ENCODE measurements at regions of chr20 and their contacts with region 1.

Region 1: DNA sequence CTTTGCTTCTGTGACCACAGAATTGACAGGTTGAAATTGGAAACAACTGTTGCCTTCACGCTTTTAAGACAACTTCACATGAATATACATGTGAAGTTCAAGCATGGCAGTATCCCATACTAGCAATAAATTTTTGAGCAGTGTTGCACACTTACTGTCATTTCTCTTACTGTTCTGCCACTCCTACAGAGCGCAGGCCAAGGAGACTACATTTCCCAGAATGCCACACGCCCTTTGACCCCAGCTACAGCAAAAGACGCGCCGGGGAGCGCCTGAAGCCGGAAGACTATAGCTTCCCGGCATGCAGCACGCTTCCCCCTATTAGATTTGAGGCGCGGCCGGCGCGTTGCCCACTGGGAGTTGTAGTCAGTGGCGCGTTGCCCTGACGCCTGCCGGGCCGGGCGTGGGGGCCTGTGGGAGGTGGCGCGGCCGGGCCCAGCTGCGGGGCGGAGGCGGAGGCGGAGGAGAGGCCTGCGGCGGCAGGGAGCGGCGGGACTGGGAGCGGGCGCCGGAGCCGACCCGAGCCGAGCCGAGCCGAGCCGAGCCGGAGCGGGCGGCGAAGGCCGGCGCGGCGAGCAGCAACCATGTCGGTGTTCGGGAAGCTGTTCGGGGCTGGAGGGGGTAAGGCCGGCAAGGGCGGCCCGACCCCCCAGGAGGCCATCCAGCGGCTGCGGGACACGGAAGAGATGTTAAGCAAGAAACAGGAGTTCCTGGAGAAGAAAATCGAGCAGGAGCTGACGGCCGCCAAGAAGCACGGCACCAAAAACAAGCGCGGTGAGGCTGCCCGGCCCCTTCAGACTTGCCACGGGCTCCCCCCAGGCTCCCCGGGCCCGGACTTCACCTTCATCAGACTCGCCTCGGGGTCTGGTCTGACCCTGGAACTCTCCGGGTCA is at the start of gene CHMP4B:
- DNase-seq: peak; percentile 97
- ATAC-seq: peak; percentile 97
- H3K4me3 Mint-ChIP-seq: peak within 1 kb of the TSS; percentile 97
- H3K27ac Mint-ChIP-seq: peak within 1 kb of the TSS; percentile 94
- H3K4me1 Mint-ChIP-seq: peaks cover 25% of the 10 kb centered on the region
- H3K27me3 Mint-ChIP-seq: peaks cover under 1% of the 10 kb centered on the region
- total RNA-seq, gene CHMP4B: 75.7 to 82.8 TPM

Region 2: DNA sequence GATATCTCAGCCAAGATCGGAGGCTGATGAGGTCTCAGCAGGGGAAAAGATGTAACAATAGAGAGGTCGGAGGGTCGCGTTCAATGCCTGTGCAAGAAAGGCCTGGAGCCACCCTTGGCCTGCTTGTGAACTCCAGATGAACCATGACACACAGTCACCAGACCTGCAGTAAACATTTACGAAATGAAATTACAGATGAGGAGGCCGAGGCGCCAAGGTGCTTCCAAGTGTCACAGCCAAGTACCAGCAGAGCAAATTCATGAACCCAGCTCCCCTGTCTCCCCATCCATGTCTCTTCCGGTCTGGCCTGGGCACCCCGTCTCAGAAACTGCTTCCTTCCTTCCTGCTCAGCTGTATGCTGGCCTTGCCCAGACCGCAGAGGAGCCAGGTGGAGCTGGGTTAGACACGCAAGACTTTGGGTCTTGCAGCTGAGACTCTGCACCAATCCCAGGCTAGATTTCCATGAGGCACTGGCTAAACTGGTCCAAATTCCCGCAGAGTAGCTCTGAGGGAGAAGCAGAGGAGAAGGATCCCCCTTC is 48.1 kb after region 1 on chr20:
- POLR2A ChIA-PET with region 1: interaction called, 24 read pairs
- DNase-seq: peak; percentile 69
- ATAC-seq: peak; percentile 82
- H3K4me3 Mint-ChIP-seq: peak overlapping the region; percentile 73
- H3K27ac Mint-ChIP-seq: peak overlapping the region; percentile 95
- H3K4me1 Mint-ChIP-seq: peaks cover 43% of the 10 kb centered on the region
- H3K27me3 Mint-ChIP-seq: no peaks in the 10 kb centered on the region

Region 3: GRCh38 chr20:33963751-33964150 is 152.6 kb after region 1 on chr20:
- POLR2A ChIA-PET with region 1: no interaction called
- DNase-seq: no peak
- ATAC-seq: no peak
- H3K4me3 Mint-ChIP-seq: no peak overlapping the region
- H3K27ac Mint-ChIP-seq: no peak overlapping the region
- H3K4me1 Mint-ChIP-seq: no peaks in the 10 kb centered on the region
- H3K27me3 Mint-ChIP-seq: no peaks in the 10 kb centered on the region

Region 4: GRCh38 chr20:33992923-33993575 is 181.9 kb after region 1 on chr20:
- POLR2A ChIA-PET with region 1: interaction called, 11 read pairs
- DNase-seq: peak; percentile 99
- ATAC-seq: peak; percentile 80
- H3K4me3 Mint-ChIP-seq: peak overlapping the region; percentile 99
- H3K27ac Mint-ChIP-seq: peak overlapping the region; percentile 99
- H3K4me1 Mint-ChIP-seq: peaks cover 38% of the 10 kb centered on the region
- H3K27me3 Mint-ChIP-seq: no peaks in the 10 kb centered on the region

Measured in activated naive CD8-positive, alpha-beta T cell treated with anti-CD3 and anti-CD28 coated beads, Interleukin-2, amount 10 ng/mL, durations not matched to agents 7 days and 5 days (primary cell).